ENCODE measurements at regions of chr5 and their contacts with region 1.

Region 1: DNA sequence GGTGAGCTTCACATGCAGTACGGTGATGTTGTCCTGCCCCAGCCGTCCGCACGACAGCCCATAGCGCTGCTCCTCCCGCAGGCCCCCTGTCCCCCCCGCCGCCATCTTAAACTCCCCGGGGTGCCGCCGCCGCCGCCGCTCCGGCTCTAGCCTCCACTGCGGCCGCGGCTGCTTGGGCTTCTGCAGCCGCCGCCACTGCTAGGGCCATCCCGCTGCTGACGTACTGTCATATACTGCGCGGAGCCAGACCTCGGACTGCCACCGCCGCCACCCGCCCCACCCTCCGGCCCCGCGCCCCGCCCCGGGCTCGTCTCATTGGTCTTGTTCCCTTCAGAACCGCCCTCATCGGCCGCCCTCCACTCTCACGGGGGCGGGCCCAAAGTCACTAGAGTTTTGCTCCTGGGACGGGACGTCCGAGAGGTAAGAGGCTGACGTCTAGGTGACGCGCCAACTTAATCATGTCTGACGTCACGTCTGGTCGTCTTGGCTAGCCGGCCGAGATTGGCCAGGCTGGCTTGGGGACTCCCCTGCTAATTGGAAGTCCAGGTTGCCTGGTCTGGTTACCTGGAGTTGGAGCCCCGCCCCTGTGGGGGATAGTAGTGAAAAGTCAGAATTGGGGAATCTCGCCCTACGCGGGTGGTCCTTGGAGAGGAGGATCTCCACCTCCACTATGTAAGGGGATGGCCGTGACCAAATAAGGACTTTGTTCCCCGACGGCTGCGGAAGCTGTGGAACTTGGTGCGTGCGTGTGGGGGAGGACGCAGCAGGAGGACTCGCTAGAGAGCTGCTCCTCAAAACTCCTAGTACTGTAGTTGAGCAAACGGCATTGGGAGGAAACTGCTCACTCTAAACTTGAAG is at the start of gene ELL2:
- DNase-seq: peak; percentile 100
- H3K4me3 ChIP-seq: peak within 1 kb of the TSS; percentile 49 to 99 (median 77)
- H3K27ac ChIP-seq: peak within 1 kb of the TSS; percentile 98
- H3K4me1 ChIP-seq: peaks cover 32% of the 10 kb centered on the region
- H3K27me3 ChIP-seq: no peaks in the 10 kb centered on the region
- CTCF ChIP-seq: no peak
- total RNA-seq, gene ELL2: 161 to 277 TPM

Region 2: DNA sequence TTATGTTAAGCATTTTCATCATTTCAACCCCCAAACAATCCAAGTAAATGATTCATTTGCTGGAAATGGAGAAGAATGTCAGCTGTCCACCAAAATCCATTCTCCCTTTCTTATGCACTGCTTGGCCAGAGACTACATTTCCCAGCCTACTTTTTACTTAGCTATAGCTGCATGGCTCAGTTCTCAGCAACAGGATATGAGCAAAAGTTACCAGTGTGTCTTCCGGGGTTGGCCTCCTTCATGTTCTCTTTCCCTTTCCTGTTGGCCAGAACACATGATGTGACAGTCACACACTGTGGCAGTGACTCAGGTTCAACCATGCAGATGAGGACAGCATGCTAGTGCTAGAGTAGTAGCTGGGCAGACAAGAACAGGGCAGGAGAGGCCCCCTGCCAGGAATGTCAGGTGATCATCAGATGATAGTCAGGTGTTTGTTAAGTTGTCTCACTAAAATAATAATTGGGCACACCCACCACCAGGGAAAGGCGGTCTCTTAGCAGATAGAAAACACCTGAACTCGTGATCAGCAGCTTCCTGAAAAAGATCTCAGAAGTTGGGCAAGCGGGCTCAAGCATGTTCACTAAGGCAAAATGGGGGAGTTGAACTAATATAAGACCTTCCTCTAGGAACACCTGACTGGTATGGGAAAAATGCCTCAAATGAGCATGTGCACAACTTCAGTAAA is 329.7 kb before region 1 on chr5:
- CTCF ChIA-PET with region 1: no interaction called
- dilution Hi-C with region 1: no loop called
- in situ Hi-C with region 1: no loop called
- intact Hi-C with region 1: no loop called
- DNase-seq: peak; percentile 54
- H3K4me3 ChIP-seq: no peak overlapping the region
- H3K27ac ChIP-seq: no peak overlapping the region
- H3K4me1 ChIP-seq: peaks cover 13% of the 10 kb centered on the region
- H3K27me3 ChIP-seq: no peaks in the 10 kb centered on the region
- CTCF ChIP-seq: no peak

Region 3: DNA sequence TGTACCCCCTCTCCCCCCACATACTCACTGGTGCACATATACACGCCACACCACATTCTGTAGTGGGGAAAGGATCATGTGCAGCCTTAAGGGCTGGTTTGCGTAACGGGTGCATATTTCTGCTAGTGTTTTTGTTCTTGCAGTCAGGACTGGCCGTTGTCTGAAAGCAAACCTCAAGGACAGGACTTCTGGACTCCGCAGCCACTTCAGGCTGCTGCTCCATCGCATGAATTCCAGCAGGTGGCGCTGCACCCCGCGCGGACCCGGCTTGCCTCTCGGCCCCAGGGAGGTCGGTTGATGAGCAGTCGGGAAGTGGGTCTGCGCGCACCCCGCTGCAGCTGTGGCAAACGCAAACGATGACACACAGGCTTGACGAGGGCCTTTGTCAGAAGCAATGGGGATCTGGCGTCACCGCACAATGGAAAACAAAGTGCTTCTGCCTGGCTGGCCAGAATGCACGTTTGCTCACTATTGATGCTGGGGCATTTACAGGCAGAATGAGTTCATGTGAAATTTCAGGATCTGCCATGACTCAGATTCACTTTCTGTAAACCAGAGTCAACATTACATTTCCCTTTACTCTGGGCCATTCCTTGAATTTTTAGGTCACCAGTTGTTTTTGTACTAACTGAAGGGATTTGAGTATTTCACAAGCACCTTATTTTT is 103.1 kb before region 1 on chr5:
- CTCF ChIA-PET with region 1: no interaction called
- dilution Hi-C with region 1: no loop called
- in situ Hi-C with region 1: no loop called
- intact Hi-C with region 1: loop called (anchors 1 kb)
- DNase-seq: peak; percentile 97
- H3K4me3 ChIP-seq: peak overlapping the region; percentile 10 to 48 (median 31)
- H3K27ac ChIP-seq: peak overlapping the region; percentile 93
- H3K4me1 ChIP-seq: peaks cover 23% of the 10 kb centered on the region
- H3K27me3 ChIP-seq: no peaks in the 10 kb centered on the region
- CTCF ChIP-seq: peak; percentile 93 to 99

Region 4: DNA sequence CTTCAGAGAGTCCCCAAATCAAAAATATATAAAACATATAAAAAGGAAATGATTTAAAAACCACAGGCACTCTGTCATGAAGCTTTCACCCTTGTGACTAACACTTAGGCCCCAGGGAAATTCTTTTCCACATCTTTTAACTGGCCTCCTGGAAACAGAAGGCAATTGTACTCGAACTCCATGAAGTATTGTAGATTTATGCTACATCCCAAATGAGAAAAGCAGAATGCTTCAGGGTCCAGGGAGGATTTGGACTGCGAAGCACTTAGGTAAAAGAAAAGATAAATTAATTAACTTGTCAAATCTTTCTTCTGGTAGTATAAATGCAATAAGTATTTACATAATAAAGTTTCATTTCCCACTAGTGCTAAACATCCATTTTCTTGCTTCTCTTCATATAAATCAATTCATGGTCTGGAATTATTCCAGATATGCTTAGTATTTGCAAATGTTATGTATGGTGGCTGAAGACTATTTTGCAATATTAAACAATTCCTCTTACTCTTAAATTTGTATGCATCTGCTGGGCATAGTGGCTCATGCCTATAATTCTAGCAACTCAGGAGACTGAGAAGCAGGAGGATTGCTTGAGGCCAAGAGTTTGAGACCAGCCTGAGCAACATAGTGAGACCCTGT is 64.7 kb after region 1 on chr5:
- CTCF ChIA-PET with region 1: no interaction called
- dilution Hi-C with region 1: loop called (anchors 5 kb)
- in situ Hi-C with region 1: no loop called
- intact Hi-C with region 1: loop called (anchors 2 kb)
- DNase-seq: peak; percentile 91
- H3K4me3 ChIP-seq: peak overlapping the region in 1 of 3 experiments; percentile 25
- H3K27ac ChIP-seq: peak overlapping the region; percentile 92
- H3K4me1 ChIP-seq: peaks cover 59% of the 10 kb centered on the region
- H3K27me3 ChIP-seq: no peaks in the 10 kb centered on the region
- CTCF ChIP-seq: no peak

Region 5: GRCh38 chr5:96079075-96079474 is 117.2 kb after region 1 on chr5:
- CTCF ChIA-PET with region 1: no interaction called
- dilution Hi-C with region 1: no loop called
- in situ Hi-C with region 1: no loop called
- intact Hi-C with region 1: loop called (anchors 1 kb)
- DNase-seq: peak; percentile 97
- H3K4me3 ChIP-seq: no peak overlapping the region
- H3K27ac ChIP-seq: peak overlapping the region; percentile 97
- H3K4me1 ChIP-seq: peaks cover 67% of the 10 kb centered on the region
- H3K27me3 ChIP-seq: no peaks in the 10 kb centered on the region
- CTCF ChIP-seq: no peak

Region 6: GRCh38 chr5:96157841-96158291 is 196.0 kb after region 1 on chr5:
- CTCF ChIA-PET with region 1: no interaction called
- dilution Hi-C with region 1: no loop called
- in situ Hi-C with region 1: no loop called
- intact Hi-C with region 1: loop called (anchors 1 kb)
- DNase-seq: peak; percentile 58
- H3K4me3 ChIP-seq: no peak overlapping the region
- H3K27ac ChIP-seq: peak overlapping the region; percentile 90
- H3K4me1 ChIP-seq: peaks cover 35% of the 10 kb centered on the region
- H3K27me3 ChIP-seq: no peaks in the 10 kb centered on the region
- CTCF ChIP-seq: no peak

Region 7: DNA sequence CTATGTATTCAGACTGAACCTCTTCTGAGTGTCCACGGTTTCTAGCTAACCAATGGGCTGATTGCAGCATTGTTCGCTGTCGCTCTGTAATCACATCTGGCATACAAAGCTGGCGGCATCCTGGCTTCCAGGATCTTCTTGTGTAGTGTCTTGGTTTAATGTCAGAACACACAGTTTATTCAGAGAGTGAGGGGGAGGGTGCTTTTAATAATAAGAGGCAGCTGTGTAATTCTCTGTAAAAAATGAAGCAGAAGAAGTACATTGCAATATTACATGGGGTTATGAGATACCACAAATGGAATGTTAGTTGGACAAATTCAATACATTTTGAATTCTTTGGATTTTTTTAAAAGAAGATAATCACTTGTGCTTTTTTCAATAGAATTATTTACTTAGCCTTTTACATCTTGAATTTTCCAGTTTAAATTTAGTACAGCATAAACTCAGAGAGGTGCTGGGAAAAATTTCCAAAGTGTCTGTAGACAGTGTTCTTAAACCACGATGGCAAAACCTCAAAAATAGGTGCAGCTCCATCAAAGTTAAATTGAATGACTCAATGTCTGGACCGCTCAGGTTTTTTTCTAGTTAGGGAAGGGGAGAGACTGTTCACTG is 265.2 kb after region 1 on chr5:
- CTCF ChIA-PET with region 1: no interaction called
- dilution Hi-C with region 1: no loop called
- in situ Hi-C with region 1: loop called in 1 of 2 experiments (anchors 25 kb)
- intact Hi-C with region 1: loop called (anchors 1 kb)
- DNase-seq: peak; percentile 89
- H3K4me3 ChIP-seq: peak overlapping the region in 1 of 3 experiments; percentile 5
- H3K27ac ChIP-seq: peak overlapping the region; percentile 96
- H3K4me1 ChIP-seq: peaks cover 30% of the 10 kb centered on the region
- H3K27me3 ChIP-seq: no peaks in the 10 kb centered on the region
- CTCF ChIP-seq: no peak

Region 8: GRCh38 chr5:96324708-96325107 is 362.9 kb after region 1 on chr5:
- CTCF ChIA-PET with region 1: no interaction called
- dilution Hi-C with region 1: no loop called
- in situ Hi-C with region 1: no loop called
- intact Hi-C with region 1: loop called (anchors 1 kb)
- DNase-seq: peak; percentile 87
- H3K4me3 ChIP-seq: no peak overlapping the region
- H3K27ac ChIP-seq: peak overlapping the region; percentile 66
- H3K4me1 ChIP-seq: peaks cover 26% of the 10 kb centered on the region
- H3K27me3 ChIP-seq: no peaks in the 10 kb centered on the region
- CTCF ChIP-seq: no peak

Measured in mammary epithelial cell (primary cell).